ENCODE measurements at regions of chr13 and their contacts with region 1.

Region 1: DNA sequence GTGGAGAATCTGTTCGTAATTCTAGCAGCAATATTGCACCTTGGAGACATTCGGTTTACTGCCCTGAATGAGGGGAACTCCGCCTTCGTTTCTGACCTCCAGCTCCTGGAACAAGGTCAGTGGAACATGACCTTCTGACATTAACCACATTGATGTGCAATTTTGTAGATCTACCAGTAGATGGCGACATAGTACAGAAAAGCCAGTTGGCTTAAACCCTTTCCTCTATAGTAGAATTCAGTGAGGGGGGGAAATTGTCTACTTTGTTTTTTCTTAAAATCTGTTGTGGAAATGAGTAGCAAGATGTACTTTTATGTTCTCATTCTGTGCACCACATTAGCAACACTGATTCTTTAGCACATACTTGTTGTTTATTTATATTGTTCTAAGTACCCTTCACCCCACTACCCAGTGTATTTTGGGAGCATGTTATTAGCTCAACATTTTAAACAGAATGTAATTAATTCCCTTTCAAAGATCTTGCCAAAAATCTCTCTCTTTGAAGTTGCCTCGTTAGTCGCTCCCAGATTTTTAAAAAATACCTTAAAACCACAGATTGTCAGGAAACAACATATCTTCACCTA is 332.2 kb downstream of the MYO16 start:
- DNase-seq: no peak
- ATAC-seq: peak; percentile 75

Region 2: DNA sequence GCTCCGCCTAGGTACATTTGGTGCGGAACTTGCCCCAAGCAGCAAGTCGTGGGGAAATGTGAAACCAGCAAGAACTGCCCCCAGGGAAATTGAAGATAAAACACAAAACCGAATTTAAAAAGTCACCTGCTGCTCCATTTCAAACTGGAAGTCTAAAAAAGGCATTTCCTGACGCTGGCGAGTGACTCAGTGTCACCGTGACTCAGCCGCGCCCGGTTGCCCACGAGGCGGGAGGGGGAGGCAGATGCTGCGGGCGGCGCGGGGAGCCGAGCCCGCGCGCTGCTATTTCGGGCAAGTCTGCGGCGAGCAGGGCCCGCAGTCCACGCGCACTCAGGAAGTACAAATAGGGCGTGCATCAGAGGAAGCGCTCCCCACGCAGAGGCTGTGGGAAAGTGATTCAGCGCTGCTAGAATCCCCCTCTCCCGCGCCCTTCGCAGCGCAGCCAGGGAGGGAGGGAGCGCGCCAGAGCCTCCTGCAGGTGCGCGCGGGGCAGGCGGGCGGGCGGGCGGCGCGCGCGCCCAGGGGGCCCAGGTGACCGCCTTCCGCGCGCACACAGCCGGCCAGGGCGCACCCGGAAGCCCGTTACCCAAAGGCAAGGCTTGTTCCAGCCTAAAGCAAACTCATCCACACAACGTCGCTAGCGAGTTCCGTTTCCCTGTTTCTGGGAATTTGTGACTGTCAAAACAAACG is 1176.5 kb after region 1 on chr13:
- intact Hi-C with region 1: loop called in 1 of 2 experiments (anchors 10 kb)
- DNase-seq: peak; percentile 43 to 58
- ATAC-seq: peak; percentile 93